Sciatic nerve (tissue), 2 donors: ENCODE measurements at regions of chr1 and their contacts with region 1.

Region 1: GRCh38 chr1:67347688-67348472 is 40.2 kb downstream of the IL12RB2 start:
- DNase-seq: no peak
- ATAC-seq: peak; percentile 87

Region 2: DNA sequence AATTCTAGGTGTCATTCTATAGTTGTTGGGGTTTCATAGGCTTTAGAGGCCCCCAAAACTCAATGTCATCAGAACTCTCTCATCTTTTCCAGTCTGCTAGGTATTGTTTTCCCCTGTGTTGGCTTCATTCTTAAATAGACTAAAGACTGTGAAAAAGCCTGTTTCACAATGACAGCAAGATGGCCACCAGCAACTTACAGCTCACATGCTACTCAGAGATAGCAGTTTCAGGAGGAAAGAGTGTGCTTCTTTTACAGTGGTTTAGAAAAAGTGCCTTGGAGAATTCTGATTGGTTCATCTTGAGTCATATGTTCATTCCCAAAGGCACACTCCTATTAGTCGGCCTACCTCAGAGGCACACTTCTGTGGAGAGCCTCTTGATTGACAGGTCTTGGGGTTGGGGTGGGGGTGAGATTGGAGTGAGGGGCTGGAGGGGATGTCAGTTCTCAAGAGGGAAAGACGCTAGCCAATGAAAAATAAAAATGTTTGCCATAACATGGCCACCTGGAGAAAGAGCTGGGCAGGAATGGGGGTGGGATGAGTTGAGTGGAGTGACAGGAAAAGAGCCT is 173.1 kb before region 1 on chr1:
- intact Hi-C with region 1: no loop called
- DNase-seq: no peak
- ATAC-seq: no peak

Region 3: DNA sequence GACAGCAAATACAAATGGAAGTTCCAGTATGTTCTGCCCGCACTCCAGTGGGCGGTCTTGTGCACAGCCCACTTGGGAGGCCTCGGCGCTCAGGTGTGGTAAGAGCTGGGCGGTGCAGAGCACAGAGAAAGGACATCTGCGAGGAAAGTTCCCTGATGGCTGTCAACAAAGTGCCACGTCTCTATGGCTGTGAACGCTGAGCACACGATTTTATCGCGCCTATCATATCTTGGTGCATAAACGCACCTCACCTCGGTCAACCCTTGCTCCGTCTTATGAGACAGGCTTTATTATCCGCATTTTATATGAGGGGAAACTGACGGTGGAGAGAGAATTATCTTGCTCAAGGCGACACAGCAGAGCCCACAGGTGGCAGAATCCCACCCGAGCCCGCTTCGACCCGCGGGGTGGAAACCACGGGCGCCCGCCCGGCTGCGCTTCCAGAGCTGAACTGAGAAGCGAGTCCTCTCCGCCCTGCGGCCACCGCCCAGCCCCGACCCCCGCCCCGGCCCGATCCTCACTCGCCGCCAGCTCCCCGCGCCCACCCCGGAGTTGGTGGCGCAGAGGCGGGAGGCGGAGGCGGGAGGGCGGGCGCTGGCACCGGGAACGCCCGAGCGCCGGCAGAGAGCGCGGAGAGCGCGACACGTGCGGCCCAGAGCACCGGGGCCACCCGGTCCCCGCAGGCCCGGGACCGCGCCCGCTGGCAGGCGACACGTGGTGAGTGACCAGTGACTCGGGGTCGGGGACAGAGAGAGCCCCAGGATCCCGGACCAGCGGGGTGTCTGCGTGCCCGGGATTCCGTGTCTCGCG is 40.4 kb before region 1 on chr1 and contains the start of gene IL12RB2:
- intact Hi-C with region 1: no loop called
- DNase-seq: no peak
- ATAC-seq: peak; percentile 46
- total RNA-seq, gene IL12RB2: 2.3 TPM

Region 4: GRCh38 chr1:67489643-67490042 is 141.8 kb after region 1 on chr1:
- intact Hi-C with region 1: loop called (anchors 5 kb)
- DNase-seq: no peak
- ATAC-seq: no peak